Endothelial cell of umbilical vein (primary cell): ENCODE measurements at regions of chr6 and their contacts with region 1.

Region 1: GRCh38 chr6:33585403-33586107 is 5.5 kb upstream of the BAK1 start:
- DNase-seq: peak; percentile 75
- H3K4me3 ChIP-seq: no peak overlapping the region
- H3K27ac ChIP-seq: no peak overlapping the region
- H3K4me1 ChIP-seq: peaks cover 18% of the 10 kb centered on the region
- H3K27me3 ChIP-seq: no peaks in the 10 kb centered on the region
- CTCF ChIP-seq: peak; percentile 89 to 96
- POLR2A ChIP-seq: no peak

Region 2: GRCh38 chr6:33439956-33440648 is 145.5 kb before region 1 on chr6:
- CTCF ChIA-PET with region 1: no interaction called
- POLR2A ChIA-PET with region 1: no interaction called
- dilution Hi-C with region 1: no loop called
- intact Hi-C with region 1: no loop called
- DNase-seq: no peak
- H3K4me3 ChIP-seq: no peak overlapping the region
- H3K27ac ChIP-seq: no peak overlapping the region
- H3K4me1 ChIP-seq: no peaks in the 10 kb centered on the region
- H3K27me3 ChIP-seq: no peaks in the 10 kb centered on the region
- CTCF ChIP-seq: no peak
- POLR2A ChIP-seq: no peak

Region 3: GRCh38 chr6:33620856-33621710 is 35.5 kb after region 1 on chr6 and contains the start of gene ITPR3:
- CTCF ChIA-PET with region 1: interaction called, 52 read pairs
- POLR2A ChIA-PET with region 1: interaction called, 3 read pairs
- dilution Hi-C with region 1: no loop called
- intact Hi-C with region 1: loop called (anchors 1 kb)
- DNase-seq: peak; percentile 32
- H3K4me3 ChIP-seq: peak within 1 kb of the TSS; percentile 78 to 93 (median 78)
- H3K27ac ChIP-seq: peak within 1 kb of the TSS; percentile 62
- H3K4me1 ChIP-seq: peaks cover 15% of the 10 kb centered on the region
- H3K27me3 ChIP-seq: no peaks in the 10 kb centered on the region
- CTCF ChIP-seq: no peak
- POLR2A ChIP-seq: peak; percentile 9
- total RNA-seq, gene ITPR3: 40.5 and 52.2 TPM in 2 replicates

Region 4: GRCh38 chr6:33672808-33673207 is 87.3 kb after region 1 on chr6:
- CTCF ChIA-PET with region 1: interaction called, 55 read pairs
- POLR2A ChIA-PET with region 1: no interaction called
- dilution Hi-C with region 1: no loop called
- intact Hi-C with region 1: loop called (anchors 1 kb)
- DNase-seq: peak; percentile 92
- H3K4me3 ChIP-seq: no peak overlapping the region
- H3K27ac ChIP-seq: peak overlapping the region; percentile 13
- H3K4me1 ChIP-seq: peaks cover 25% of the 10 kb centered on the region
- H3K27me3 ChIP-seq: no peaks in the 10 kb centered on the region
- CTCF ChIP-seq: peak; percentile 51 to 70
- POLR2A ChIP-seq: no peak

Region 5: DNA sequence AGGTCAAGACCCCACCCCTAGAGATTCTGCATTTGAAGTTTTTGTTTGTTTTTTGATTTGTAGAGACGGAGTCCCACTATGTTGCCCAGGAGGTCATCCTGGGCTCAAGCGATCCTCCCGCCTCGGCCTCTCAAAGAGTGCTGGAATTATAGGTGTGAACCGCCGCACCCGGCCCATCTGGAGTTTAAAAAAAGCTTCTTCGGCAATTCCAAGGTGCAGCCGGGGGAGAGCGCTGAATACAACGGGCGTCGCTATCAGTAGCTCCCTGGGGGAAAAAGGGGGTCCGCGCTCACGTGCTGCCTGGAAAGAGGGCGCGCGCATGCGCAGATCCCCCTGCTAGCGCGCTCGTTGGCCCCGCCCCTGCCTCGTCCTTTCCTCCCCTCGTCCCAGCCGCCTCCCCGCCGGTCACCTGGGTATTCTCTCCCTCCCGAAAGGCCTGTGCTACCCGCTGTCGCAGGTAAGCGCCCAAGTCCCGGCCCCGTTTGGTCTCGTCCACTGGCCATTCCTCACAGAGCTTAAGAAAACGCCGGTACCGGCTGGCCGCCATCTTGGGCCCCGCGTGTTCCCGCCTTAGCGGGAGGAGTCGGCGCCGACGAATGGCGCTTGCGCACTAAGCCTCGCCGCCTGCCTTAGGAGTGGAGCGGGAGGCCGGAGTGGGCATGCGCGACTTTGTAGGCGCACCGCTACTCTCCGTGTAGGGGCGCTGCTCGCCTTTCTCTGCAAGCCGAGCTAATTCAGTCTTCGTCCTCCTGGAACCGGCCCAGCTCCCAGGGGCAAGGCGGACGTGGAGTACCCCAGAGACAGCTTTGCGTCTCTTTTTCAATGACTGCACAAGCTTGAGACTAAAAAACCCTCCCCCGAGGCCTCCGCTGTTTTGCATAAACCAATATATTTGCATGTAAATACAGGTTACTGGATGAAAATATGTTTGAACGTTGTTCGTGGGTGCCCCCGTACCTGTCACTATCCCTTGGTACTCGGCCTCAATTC is 125.9 kb after region 1 on chr6 and contains the start of gene UQCC2:
- CTCF ChIA-PET with region 1: interaction called, 14 read pairs
- POLR2A ChIA-PET with region 1: interaction called, 3 read pairs
- dilution Hi-C with region 1: no loop called
- intact Hi-C with region 1: loop called (anchors 1 kb)
- DNase-seq: peak; percentile 97
- H3K4me3 ChIP-seq: peak within 1 kb of the TSS; percentile 74 to 92 (median 85)
- H3K27ac ChIP-seq: peak within 1 kb of the TSS; percentile 95
- H3K4me1 ChIP-seq: peaks cover 17% of the 10 kb centered on the region
- H3K27me3 ChIP-seq: no peaks in the 10 kb centered on the region
- CTCF ChIP-seq: peak; percentile 57 to 75
- POLR2A ChIP-seq: peak; percentile 97
- total RNA-seq, gene UQCC2: 91.5 and 95.3 TPM in 2 replicates

Region 6: DNA sequence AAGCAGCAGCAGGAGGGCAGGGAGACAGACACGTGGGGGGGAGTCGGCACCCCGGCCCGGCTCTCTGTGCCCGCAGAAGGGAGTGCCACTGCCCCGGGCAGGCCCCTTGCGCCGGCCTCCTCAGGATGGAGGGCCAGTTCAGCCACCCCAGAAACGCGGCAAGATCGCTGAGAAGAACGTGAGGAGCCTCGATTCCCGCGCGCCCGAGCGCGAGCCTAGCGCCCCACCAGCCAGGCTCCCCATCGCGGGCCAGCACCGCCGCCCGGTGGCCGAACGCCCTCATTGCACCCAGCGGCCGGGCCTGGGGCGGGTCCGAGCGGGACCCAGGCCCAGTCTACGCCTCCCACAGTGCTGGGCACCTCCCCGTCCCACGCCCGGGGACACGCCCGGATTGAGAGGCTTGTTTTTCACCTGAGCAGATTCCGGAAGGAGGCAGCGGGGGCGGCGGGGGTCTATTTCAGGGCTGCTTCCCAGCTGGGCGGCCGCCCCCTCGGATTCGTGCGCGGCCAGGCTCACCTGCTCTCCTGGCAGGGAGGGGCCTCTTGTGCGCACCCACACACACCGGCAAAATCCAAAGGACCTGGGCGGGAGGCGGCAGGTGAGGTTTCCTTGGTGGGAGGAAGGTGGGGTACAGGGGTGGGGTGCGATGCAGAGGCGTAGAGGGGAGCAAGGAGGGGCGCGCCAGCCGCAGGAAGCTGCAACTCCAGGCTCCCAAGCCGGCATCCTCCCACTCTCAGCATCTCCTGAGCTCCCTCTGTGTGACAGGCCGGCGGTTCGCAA is 569.3 kb after region 1 on chr6:
- CTCF ChIA-PET with region 1: no interaction called
- POLR2A ChIA-PET with region 1: no interaction called
- dilution Hi-C with region 1: no loop called
- intact Hi-C with region 1: loop called (anchors 2 kb)
- DNase-seq: peak; percentile 17
- H3K4me3 ChIP-seq: no peak overlapping the region
- H3K27ac ChIP-seq: no peak overlapping the region
- H3K4me1 ChIP-seq: no peaks in the 10 kb centered on the region
- H3K27me3 ChIP-seq: peaks cover 13 to 29% of the 10 kb centered on the region in 2 experiments
- CTCF ChIP-seq: peak; percentile 95
- POLR2A ChIP-seq: no peak